Activated CD8-positive, alpha-beta T cell treated with anti-CD3 and anti-CD28 coated beads, Interleukin-2, amount 10 ng/mL, durations not matched to agents 7 days and 5 days (primary cell): ENCODE measurements at regions of chr2 and their contacts with region 1.

Region 1: DNA sequence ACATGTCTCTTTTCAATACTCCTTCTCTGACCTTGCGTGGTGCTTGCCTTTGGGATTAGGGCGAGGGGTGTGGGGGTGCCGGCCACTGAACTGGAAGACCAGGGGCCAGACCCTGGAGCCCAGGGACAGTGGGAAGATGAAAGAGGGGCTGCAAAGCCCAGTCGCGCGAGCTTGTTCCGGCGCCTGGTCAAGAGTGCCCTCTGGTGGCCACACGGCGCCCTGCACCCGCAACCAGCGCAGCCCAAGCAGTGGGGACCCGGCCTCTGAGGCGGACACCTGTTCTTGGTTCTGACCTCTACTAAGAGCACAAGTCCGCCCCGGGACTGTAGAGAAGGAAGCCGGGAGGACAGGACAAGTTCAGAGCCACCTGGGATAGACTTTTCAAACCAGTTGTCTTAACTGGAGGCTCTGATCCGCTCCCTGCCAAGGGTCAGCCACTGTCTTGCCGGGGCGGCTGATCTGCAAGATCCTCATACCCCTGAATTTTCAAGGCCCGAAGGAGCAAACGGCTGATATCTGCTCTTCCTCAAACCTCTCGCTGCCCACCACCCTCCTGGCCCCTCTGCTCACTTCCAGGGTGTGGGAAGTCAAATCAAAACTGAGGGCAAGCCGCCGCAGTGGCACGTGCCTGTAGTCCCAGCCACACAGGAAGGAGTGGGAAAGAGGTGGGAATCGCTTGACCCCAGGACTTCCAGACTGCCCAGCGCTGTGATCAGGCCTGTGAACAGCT is 14.9 kb upstream of the MSH6 start:
- DNase-seq: peak; percentile 74
- ATAC-seq: peak; percentile 83
- H3K4me3 Mint-ChIP-seq: peak overlapping the region; percentile 37
- H3K27ac Mint-ChIP-seq: no peak overlapping the region
- H3K4me1 Mint-ChIP-seq: peaks cover 8% of the 10 kb centered on the region
- H3K27me3 Mint-ChIP-seq: peaks cover 3% of the 10 kb centered on the region

Region 2: DNA sequence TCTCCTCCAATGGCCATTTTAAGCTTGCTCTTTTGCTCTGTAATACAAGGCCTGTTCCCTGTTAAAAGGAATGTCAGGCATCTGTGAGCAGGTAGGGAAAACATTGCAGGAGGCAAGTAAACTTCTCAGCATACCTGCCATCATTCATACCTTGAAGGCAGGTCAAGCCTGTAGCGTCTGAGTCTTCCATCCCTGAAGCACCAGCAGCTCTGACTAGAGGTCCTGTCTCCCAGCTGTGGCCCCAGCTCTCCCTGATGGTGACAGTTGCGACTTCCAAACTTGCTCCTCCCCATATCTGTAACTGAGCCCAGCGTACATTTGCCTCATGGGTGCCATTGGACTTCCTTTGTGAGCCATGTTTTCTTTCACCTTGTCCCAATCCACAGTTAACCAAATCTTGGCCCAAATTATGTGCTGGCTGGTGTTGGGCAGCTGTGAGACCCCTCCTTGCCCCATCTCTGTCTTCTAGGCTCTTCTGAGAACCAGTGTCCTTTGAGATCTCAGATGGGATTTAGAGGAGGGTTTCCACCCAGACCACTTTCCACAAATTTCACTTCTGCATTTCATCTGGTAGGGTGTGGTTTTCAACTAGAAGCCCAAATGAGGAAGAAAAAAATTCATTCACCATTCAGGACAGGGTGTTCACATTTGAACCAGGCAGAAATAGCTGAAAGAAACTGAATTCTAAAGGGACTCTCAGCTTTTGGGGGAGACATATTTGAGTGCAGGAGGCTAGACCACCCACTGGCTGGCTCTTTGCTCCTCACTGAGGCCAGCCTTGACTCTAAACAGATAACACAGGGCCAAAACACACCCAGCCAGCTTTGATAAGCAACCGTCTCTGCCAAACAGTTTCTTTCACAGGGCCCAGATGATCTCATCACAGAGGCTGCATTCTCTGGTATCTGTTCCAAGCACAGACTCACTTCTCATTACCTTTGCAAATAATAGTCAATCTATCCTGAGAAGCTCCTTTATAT is 431.5 kb before region 1 on chr2:
- CTCF ChIA-PET with region 1: interaction called, 49 read pairs
- POLR2A ChIA-PET with region 1: no interaction called
- DNase-seq: no peak
- ATAC-seq: no peak
- H3K4me3 Mint-ChIP-seq: no peak overlapping the region
- H3K27ac Mint-ChIP-seq: no peak overlapping the region
- H3K4me1 Mint-ChIP-seq: no peaks in the 10 kb centered on the region
- H3K27me3 Mint-ChIP-seq: peaks cover 18% of the 10 kb centered on the region

Region 3: GRCh38 chr2:47402805-47403608 is 365.0 kb before region 1 on chr2 and contains the start of gene MSH2:
- CTCF ChIA-PET with region 1: interaction called, 13 read pairs
- POLR2A ChIA-PET with region 1: no interaction called
- DNase-seq: peak; percentile 95
- ATAC-seq: peak; percentile 94
- H3K4me3 Mint-ChIP-seq: peak within 1 kb of the TSS; percentile 89
- H3K27ac Mint-ChIP-seq: peak within 1 kb of the TSS; percentile 92
- H3K4me1 Mint-ChIP-seq: peaks cover 34% of the 10 kb centered on the region
- H3K27me3 Mint-ChIP-seq: no peaks in the 10 kb centered on the region
- total RNA-seq, gene MSH2: 52.5 to 59.3 TPM

Region 4: GRCh38 chr2:47486841-47487497 is 281.1 kb before region 1 on chr2:
- CTCF ChIA-PET with region 1: interaction called, 10 read pairs
- POLR2A ChIA-PET with region 1: no interaction called
- DNase-seq: peak; percentile 47
- ATAC-seq: peak; percentile 79
- H3K4me3 Mint-ChIP-seq: no peak overlapping the region
- H3K27ac Mint-ChIP-seq: peak overlapping the region; percentile 77
- H3K4me1 Mint-ChIP-seq: peaks cover 21% of the 10 kb centered on the region
- H3K27me3 Mint-ChIP-seq: no peaks in the 10 kb centered on the region

Region 5: DNA sequence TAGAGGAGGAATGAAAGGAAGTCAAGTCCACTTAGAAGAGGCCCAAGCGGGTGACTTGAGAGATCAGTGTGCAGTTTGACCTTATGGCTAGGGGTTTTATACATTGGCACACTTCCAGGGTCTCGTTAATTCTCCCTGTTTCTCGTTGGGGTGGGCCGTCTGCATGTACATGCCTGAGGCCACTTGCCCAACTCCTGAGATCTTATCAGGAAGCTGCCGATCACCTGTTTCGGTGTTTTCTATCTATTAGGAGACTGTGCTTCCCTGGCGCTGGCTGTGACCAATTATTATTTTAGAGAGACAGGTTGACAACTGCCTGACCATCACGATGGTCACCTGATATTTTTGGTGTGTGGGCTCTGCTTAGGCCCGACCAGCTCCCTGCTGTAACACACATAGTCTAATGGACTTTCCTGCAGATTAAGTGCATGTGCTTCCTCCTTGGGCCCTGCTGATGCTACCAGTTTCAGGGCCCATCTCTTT is 16.1 kb before region 1 on chr2:
- CTCF ChIA-PET with region 1: interaction called, 10 read pairs
- POLR2A ChIA-PET with region 1: no interaction called
- DNase-seq: no peak
- ATAC-seq: no peak
- H3K4me3 Mint-ChIP-seq: no peak overlapping the region
- H3K27ac Mint-ChIP-seq: no peak overlapping the region
- H3K4me1 Mint-ChIP-seq: no peaks in the 10 kb centered on the region
- H3K27me3 Mint-ChIP-seq: no peaks in the 10 kb centered on the region

Region 6: DNA sequence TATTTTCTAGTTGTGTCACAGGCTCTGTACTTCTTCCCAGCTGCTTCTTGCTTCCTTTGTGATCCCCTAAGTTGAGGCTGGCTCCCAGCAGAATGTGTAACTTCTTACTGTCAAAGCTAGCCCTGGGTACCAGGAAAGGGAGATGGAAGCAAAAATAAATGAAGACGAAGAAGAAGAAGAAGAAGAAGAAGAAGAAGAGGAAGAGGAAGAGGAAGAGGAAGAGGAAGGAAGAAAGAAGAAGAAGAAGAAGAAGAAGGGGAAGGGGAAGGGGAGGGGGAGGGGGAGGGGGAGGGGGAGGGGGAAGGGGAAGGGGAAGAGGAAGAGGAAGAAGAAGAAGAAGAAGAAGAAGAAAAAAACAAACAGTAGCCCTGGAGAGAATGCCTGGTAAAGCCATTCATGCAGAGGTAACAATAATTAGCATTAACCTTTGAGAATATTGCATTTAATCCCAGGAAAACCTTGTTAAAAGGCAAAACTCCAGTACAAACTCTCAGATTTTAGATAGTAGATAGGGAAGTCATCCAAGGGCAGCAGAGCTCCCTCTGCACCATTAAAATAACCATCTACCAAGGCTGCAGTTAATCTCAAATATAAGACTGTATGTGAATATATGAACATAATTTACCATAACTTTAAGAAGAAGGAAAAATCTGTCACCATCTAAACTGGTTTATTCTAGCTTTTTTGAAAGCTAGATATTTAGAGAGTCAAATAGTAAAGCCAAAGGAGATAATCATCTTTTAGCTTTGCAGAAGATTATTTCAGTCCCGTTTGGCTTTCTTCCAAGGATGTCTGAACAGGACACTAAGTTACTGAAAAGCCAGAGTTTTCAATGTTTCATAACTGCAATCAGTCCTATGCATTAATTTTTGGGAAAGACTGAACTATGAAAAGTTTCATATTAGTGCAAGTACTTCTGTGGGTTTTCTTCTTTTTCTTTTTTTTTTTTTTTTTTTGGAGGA is 182.6 kb after region 1 on chr2:
- CTCF ChIA-PET with region 1: no interaction called
- POLR2A ChIA-PET with region 1: no interaction called
- DNase-seq: no peak
- ATAC-seq: no peak
- H3K4me3 Mint-ChIP-seq: no peak overlapping the region
- H3K27ac Mint-ChIP-seq: no peak overlapping the region
- H3K4me1 Mint-ChIP-seq: no peaks in the 10 kb centered on the region
- H3K27me3 Mint-ChIP-seq: no peaks in the 10 kb centered on the region